ENCODE measurements at regions of chr4 and their contacts with region 1.

Region 1: GRCh38 chr4:27010334-27010940 is 149.8 kb downstream of the STIM2 start:
- DNase-seq: no peak
- CTCF ChIP-seq: peak; percentile 69

Region 2: GRCh38 chr4:26061248-26061986 is 949.0 kb before region 1 on chr4:
- in situ Hi-C with region 1: loop called (anchors 25 kb)
- DNase-seq: peak; percentile 68
- CTCF ChIP-seq: peak; percentile 64

Region 3: DNA sequence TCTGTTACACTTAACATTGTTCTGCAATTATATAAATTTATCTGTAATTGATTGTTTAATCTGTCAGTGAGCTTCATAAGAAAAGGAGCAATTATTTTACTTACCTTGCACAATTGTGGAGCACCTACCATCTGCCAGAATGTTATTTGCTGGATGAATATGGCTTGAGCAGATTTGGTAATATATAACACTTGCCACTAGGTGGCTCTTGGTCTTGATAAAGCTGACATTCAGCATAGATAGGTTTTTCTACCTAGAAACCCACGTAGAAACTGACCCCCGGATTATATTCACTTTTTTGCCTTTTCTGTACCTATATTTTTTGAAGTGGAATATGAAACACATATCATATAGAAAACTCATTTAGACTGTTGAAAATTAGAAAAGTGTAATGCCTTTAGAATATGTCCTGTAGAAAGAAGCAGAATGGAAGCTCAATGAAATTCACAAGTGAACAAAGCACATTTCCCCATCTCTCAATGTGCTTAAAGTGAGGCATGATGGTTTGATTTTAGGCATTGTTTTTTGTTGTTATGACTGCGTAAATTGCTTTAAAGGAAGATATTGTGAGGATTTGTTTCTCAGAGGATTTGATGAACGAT is 680.1 kb before region 1 on chr4:
- in situ Hi-C with region 1: loop called (anchors 25 kb)
- DNase-seq: peak; percentile 54
- CTCF ChIP-seq: peak; percentile 54

Region 4: GRCh38 chr4:26746802-26747213 is 263.6 kb before region 1 on chr4:
- in situ Hi-C with region 1: loop called (anchors 25 kb)
- DNase-seq: peak; percentile 47
- CTCF ChIP-seq: no peak

Region 5: DNA sequence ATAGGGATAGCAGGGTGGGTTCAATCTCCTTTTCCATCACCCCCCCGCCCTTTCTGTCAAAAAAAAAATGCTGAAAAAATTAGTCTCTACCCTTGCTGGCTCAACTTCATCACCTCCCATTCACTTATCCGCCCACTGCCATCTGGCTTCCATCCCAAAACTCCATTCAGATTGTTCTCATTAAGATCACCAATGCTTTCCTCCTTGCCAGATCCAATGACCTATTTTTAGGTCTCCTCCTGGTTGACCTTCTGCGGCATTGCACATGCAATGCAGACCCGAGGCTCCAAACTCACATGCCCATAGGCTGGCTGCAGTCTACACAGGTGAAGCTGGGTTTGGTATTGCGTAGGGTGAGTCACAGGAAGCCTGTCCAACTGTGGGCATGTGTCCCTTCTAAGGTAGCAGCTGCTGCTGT is 170.9 kb before region 1 on chr4:
- in situ Hi-C with region 1: no loop called
- DNase-seq: no peak
- CTCF ChIP-seq: no peak

Region 6: GRCh38 chr4:26936284-26937065 is 74.0 kb before region 1 on chr4:
- in situ Hi-C with region 1: no loop called
- DNase-seq: no peak
- CTCF ChIP-seq: no peak

Region 7: DNA sequence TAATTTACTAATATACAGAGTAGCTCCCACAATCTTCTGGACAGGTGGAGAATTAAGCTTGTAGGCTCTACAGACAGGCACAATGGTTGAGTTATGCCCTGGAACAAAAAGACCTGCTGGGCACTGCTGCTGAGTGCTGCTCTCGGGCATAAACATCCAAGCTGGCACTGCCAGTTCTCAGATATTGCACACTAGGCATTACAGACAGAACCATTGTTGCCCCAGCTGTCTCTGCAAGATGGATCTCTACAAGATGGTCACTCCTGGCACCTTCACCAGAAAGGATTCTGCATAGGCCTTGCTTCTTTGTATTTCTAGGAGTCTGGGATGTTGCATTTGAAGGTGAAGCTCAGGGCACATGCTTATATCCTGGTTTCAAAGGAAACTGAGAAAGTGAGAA is 377.3 kb after region 1 on chr4:
- in situ Hi-C with region 1: no loop called
- DNase-seq: no peak
- CTCF ChIP-seq: no peak